CD4-positive, alpha-beta T cell (primary cell): ENCODE measurements at regions of chr2 and their contacts with region 1.

Region 1: DNA sequence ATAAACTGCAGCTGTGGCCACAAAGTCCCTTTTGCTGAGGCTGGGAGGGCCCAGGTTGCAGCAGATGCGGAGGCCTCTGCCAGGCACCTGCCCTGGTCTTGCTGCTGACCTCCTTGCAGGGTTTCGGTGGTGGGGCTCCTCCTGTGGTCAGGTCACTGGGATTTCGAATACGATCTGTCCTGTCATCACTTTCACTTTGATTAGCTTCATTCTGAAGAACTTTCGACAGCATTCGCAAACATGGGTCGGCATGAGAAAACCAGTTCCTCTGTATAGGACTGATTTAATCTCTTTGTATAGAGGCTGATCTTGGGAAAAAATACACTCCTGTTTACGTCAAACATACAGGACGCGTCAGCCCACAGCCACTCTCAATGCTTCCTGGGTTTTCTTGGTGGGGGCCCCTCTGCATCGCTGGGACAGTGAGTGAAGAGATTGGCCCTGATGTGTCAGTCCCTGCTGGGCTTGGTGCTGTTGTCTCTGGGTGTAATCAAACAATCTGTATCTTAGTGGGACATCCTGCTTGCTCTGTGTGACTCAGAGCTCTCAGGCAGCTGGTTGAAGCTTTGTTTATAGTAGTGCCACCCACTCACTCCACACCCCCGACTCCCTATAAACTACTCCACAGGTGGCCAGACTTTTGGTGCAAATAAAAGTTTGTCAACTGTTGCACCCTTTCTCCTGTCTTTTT is 209.4 kb upstream of the CXCR4 start:
- DNase-seq: peak; percentile 64 to 93 (median 78)
- ATAC-seq: peak; percentile 92
- H3K4me3 ChIP-seq: peak overlapping the region; percentile 44
- H3K4me3 Mint-ChIP-seq: peak overlapping the region; percentile 79
- H3K27ac ChIP-seq: peak overlapping the region; percentile 74 to 90
- H3K27ac Mint-ChIP-seq: peak overlapping the region; percentile 90
- H3K4me1 ChIP-seq: peaks cover 54% of the 10 kb centered on the region
- H3K4me1 Mint-ChIP-seq: peaks cover 64% of the 10 kb centered on the region
- H3K27me3 ChIP-seq: no peaks in the 10 kb centered on the region
- H3K27me3 Mint-ChIP-seq: no peaks in the 10 kb centered on the region
- CTCF ChIP-seq: no peak

Region 2: GRCh38 chr2:136281281-136282114 is 45.8 kb before region 1 on chr2:
- CTCF ChIA-PET with region 1: interaction called, 3 read pairs
- POLR2A ChIA-PET with region 1: interaction called, 8 read pairs
- intact Hi-C with region 1: loop called in 1 of 2 experiments (anchors 1 kb)
- DNase-seq: peak; percentile 16 to 92 (median 32)
- ATAC-seq: peak; percentile 78
- H3K4me3 ChIP-seq: no peak overlapping the region
- H3K4me3 Mint-ChIP-seq: peak overlapping the region; percentile 5
- H3K27ac ChIP-seq: peak overlapping the region; percentile 8 to 58
- H3K27ac Mint-ChIP-seq: peak overlapping the region; percentile 86
- H3K4me1 ChIP-seq: peaks cover 31% of the 10 kb centered on the region
- H3K4me1 Mint-ChIP-seq: peaks cover 40% of the 10 kb centered on the region
- H3K27me3 ChIP-seq: no peaks in the 10 kb centered on the region
- H3K27me3 Mint-ChIP-seq: no peaks in the 10 kb centered on the region
- CTCF ChIP-seq: no peak